ENCODE measurements at regions of chr3 and their contacts with region 1.

Region 1: GRCh38 chr3:64533617-64534317 is 154.0 kb downstream of the ADAMTS9 start:
- DNase-seq: peak; percentile 82
- ATAC-seq: peak; percentile 96 to 98
- H3K4me3 ChIP-seq: peak overlapping the region in 2 of 4 donors; percentile 20 to 44
- H3K27ac ChIP-seq: peak overlapping the region in 3 of 4 donors; percentile 50 to 65 (median 60)
- H3K4me1 ChIP-seq: peaks cover 6% of the 10 kb centered on the region in 2 donors
- H3K27me3 ChIP-seq: no peaks in the 10 kb centered on the region
- CTCF ChIP-seq: peak; percentile 76 to 92 (median 86)
- POLR2A ChIP-seq: no peak

Region 2: GRCh38 chr3:64505419-64505818 is 28.3 kb before region 1 on chr3:
- in situ Hi-C with region 1: no loop called
- intact Hi-C with region 1: no loop called
- DNase-seq: no peak
- ATAC-seq: no peak
- H3K4me3 ChIP-seq: no peak overlapping the region
- H3K27ac ChIP-seq: no peak overlapping the region
- H3K4me1 ChIP-seq: no peaks in the 10 kb centered on the region
- H3K27me3 ChIP-seq: no peaks in the 10 kb centered on the region
- CTCF ChIP-seq: no peak
- POLR2A ChIP-seq: no peak

Region 3: DNA sequence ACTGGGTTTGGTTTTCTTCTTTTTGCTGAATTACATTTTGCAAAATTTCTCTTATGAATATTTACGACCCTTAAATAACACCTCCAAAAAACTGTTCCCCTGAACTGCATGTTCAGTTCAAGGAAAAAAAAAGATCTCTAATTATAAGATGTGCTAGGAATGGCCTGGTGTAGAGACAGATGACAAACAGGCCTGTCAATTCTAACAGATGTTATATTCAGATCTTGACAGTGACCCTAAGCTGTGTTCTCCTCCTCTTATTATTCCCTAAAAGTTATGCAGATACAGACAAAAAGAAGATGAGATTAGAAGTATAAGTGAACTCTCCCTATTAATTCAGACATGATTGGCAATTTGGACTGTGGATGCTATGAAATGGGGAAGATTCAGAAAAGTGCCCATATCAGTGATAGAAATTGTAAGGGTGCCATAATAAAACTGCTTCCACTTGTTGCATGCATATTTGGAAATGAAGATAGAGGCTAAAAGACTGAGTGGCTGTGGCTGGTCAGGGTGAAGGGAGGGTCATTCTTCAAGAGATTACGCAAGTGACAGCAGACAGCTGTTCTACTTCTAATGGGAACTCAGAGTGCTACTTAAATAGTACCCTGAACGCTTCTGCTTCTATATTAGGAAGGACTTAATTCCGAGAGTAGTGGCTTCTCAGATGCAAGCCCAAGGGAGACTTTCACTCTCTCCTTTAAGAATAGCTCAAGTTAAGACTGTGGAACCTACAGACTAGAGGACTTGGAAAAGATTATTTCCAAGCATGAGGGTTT is 78.5 kb after region 1 on chr3:
- in situ Hi-C with region 1: loop called in 1 of 4 experiments (anchors 10 kb)
- intact Hi-C with region 1: loop called (anchors 5 kb)
- DNase-seq: peak; percentile 75 to 76
- ATAC-seq: peak; percentile 98 to 99
- H3K4me3 ChIP-seq: peak overlapping the region; percentile 33 to 41 (median 35)
- H3K27ac ChIP-seq: peak overlapping the region; percentile 82 to 92 (median 88)
- H3K4me1 ChIP-seq: peaks cover 51 to 68% of the 10 kb centered on the region in 2 donors
- H3K27me3 ChIP-seq: no peaks in the 10 kb centered on the region
- CTCF ChIP-seq: no peak
- POLR2A ChIP-seq: peak; percentile 12 to 56

Region 4: DNA sequence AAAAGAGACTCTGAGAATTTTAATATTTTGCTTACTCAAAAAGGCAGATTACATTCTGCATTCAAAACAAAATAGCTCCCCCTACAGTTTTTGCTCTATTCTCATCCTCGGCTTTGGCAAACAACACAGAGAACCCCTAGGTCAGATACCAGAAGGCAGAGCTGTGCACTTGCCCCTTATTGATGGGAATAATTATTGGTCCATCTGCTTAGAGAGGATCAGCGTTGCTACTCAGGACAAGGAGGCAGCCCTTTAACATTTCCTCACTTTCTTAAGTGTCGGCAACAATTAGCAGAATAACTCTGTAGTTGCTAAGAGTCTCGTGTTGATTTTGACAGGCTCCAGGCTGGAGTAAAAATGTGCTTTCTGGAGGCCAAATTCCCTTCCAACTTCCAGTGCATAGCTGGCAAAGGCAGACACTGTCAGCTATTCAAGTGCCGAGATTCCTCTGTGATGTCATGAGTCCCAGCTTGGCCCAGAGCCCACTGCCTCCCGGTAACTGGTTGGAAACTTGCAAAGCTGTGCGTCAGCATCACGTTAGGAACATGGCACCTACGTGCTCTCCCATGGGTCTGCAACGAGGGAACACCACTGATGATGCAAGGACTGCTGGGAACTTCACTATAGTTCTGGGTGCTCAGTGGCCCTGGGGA is 636.7 kb after region 1 on chr3:
- in situ Hi-C with region 1: no loop called
- intact Hi-C with region 1: loop called (anchors 5 kb)
- DNase-seq: peak; percentile 41 to 71
- ATAC-seq: peak; percentile 73 to 85
- H3K4me3 ChIP-seq: no peak overlapping the region
- H3K27ac ChIP-seq: peak overlapping the region; percentile 51 to 74 (median 62)
- H3K4me1 ChIP-seq: peaks cover 3 to 4% of the 10 kb centered on the region in 2 donors
- H3K27me3 ChIP-seq: no peaks in the 10 kb centered on the region
- CTCF ChIP-seq: peak in 2 of 5 experiments; percentile 28 to 34
- POLR2A ChIP-seq: peak in 1 of 2 donors; percentile 8

Region 5: DNA sequence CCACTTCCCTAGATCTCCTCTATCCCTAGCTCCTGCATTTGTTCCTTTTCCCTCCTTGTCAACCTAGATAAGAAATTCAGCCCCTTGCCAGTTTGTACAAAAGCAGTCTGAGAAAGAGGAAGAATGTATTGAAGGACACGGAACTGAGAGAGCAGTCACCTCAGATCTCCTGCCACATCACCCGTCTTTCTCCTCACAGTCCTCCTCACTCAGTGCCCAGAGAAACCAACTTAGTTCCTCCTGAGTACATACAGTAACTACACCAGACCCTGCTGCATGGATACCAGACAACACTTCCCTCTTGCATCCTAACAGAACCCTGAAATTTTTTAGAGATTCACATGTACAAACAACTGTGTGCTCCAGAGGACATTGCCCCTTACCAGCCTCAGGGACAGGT is 717.6 kb after region 1 on chr3:
- in situ Hi-C with region 1: loop called in 3 of 4 experiments (anchors 10 to 25 kb)
- intact Hi-C with region 1: loop called (anchors 5 kb)
- DNase-seq: no peak
- ATAC-seq: no peak
- H3K4me3 ChIP-seq: no peak overlapping the region
- H3K27ac ChIP-seq: no peak overlapping the region
- H3K4me1 ChIP-seq: no peaks in the 10 kb centered on the region
- H3K27me3 ChIP-seq: no peaks in the 10 kb centered on the region
- CTCF ChIP-seq: no peak
- POLR2A ChIP-seq: no peak

Region 6: DNA sequence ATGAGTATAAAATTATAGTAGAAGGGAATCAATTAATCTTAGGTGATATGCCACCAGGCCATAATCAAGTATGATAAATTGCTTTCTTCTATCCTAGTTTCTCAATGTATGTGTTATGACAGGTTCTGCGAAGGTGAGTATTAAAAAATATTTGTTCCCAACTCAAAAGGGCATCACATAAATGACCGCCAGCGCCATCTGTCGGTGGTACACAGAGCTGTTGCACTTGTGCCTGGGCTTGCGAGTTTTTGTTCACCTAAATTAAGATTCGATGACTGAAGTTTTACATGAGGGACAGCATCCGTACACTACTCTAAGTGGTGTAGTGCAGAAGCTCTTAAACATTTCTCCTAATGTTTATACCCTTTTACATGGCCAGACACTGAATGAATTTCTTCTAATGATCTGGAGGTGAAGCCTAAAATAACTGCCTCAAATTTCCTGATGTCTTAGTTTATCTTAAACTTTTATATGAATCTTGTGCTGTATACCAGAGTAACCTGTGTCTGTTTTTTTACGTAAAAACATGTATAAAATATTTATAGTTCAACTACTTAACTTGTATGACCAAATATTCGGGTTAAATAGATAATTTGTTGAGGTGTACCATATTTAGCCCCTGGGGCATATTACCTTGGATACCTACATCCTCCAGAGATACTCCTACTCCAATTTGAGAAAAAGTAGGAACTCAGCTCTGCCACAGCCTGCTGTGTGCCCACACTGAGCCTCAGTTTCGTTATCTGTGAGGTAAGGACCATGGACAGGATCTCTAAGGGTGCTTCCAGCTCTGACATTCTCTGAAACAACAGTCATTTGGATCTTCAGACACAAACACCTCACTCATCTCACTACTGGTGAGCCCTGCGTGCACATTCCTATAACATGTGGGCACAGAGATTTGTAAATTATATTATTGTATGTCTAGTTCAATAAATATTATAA is 1139.4 kb after region 1 on chr3:
- in situ Hi-C with region 1: no loop called
- intact Hi-C with region 1: loop called (anchors 2 kb)
- DNase-seq: peak; percentile 5 to 38
- ATAC-seq: peak in 1 of 2 donors; percentile 39
- H3K4me3 ChIP-seq: no peak overlapping the region
- H3K27ac ChIP-seq: no peak overlapping the region
- H3K4me1 ChIP-seq: no peaks in the 10 kb centered on the region
- H3K27me3 ChIP-seq: no peaks in the 10 kb centered on the region
- CTCF ChIP-seq: peak; percentile 56 to 87 (median 76)
- POLR2A ChIP-seq: no peak